GM18951 (cell line): ENCODE measurements at regions of chr12 and their contacts with region 1.

Region 1: DNA sequence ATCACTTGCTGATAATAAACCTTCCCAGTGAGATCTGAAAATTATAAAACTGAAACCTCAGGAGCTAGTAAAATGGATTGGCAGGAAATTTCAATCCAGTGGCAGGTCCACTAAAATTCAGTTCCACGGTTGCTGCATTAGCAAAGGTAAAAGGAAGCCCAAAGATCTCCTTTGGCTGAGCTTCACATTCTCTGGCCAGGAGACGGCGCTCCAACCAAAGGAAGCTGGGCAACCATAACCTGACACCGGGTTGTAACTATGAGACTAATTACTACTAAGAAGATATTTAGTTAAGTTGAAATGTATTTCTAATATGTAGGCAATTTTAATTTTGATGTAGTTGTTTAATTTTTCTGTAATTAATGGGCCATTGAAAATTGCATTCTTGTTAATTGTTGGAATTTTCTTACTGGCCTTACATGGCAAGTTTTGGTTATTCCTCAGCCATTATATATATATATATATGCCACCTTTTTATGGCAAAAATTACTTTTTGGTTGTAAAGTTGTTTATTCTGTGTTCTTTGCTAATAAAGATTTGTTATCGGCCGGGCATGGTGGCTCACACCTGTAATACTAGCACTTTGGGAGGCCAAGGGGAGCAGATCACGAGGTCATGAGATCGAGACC is 17.0 kb downstream of the OR8S1 start:
- POLR2A ChIP-seq: no peak

Region 2: GRCh38 chr12:48618541-48618940 is 76.1 kb after region 1 on chr12:
- in situ Hi-C with region 1: loop called (anchors 5 kb)
- POLR2A ChIP-seq: no peak